ENCODE measurements at regions of chr2 and their contacts with region 1.

Region 1: DNA sequence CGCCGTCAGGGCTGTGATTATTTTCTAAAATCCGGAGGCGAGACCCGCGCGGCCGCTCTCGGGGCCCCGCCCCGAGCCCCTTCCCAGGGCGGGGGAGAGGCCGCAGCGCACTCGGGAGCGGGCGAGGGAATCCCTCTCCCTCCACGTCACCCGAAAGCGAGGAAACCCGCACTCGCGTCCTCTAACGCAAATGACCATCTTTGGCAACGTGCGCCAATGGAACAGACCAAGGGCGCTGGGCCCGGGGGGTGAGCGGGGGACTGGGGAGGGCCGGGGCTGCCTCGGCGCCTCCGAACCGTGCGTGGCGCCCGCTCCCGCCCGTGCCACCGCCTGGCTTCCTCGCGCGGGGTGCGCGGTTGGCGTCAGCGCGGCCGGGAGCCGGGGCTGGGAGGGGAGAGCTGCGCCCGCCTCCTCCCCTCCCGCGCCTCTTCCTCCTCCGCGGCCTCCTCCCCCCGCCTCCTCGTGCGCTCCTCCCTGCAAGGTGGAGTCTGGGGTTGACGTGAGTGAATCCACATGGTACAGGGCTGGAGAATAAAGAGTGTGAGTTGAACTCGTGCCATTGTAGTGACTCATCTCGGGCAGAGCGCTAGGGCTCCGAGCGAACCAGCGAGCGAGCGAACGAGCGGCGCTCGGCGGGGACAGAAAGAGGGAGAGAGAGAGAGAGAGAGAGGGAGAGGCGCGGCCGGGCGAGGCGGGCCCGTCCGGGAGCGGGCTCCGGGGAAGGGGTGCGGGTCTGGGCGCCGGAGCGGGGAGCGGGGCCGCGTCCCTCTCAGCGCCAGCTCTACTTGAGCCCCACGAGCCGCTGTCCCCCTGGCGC is at the start of gene FOSL2:
- DNase-seq: peak; percentile 100
- ATAC-seq: peak; percentile 62
- H3K4me3 ChIP-seq: peak within 1 kb of the TSS; percentile 91
- H3K27ac ChIP-seq: peak within 1 kb of the TSS; percentile 93
- H3K4me1 ChIP-seq: peaks cover 12% of the 10 kb centered on the region
- H3K27me3 ChIP-seq: no peaks in the 10 kb centered on the region
- CTCF ChIP-seq: 0 out of 2 replicates have a peak, but pooled peaks have one; percentile 5
- POLR2A ChIP-seq: peak; percentile 41; the same call in 1 of the 2 replicates
- RAD21 ChIP-seq: peak; percentile 30
- total RNA-seq, gene FOSL2: 31.4 and 32.2 TPM in 2 replicates

Region 2: GRCh38 chr2:27703638-27704341 is 688.7 kb before region 1 on chr2:
- CTCF ChIA-PET with region 1: interaction called, 3 read pairs
- POLR2A ChIA-PET with region 1: interaction called, 18 read pairs
- dilution Hi-C with region 1: no loop called
- in situ Hi-C with region 1: no loop called
- intact Hi-C with region 1: loop called (anchors 1 kb)
- DNase-seq: peak; percentile 96
- ATAC-seq: peak; percentile 70
- H3K4me3 ChIP-seq: no peak overlapping the region
- H3K27ac ChIP-seq: peak overlapping the region; percentile 35; the same call in 1 of the 2 replicates
- H3K4me1 ChIP-seq: peaks cover 18% of the 10 kb centered on the region
- H3K27me3 ChIP-seq: no peaks in the 10 kb centered on the region
- CTCF ChIP-seq: peak; percentile 96
- POLR2A ChIP-seq: no peak
- RAD21 ChIP-seq: peak; percentile 93

Region 3: GRCh38 chr2:27771548-27772335 is 620.8 kb before region 1 on chr2 and contains the start of gene MRPL33:
- CTCF ChIA-PET with region 1: interaction called, 3 read pairs
- POLR2A ChIA-PET with region 1: no interaction called
- dilution Hi-C with region 1: no loop called
- in situ Hi-C with region 1: no loop called
- intact Hi-C with region 1: loop called (anchors 1 kb)
- DNase-seq: peak; percentile 85
- ATAC-seq: peak; percentile 97
- H3K4me3 ChIP-seq: peak within 1 kb of the TSS; percentile 73
- H3K27ac ChIP-seq: peak within 1 kb of the TSS; percentile 88
- H3K4me1 ChIP-seq: peaks cover 12% of the 10 kb centered on the region
- H3K27me3 ChIP-seq: no peaks in the 10 kb centered on the region
- CTCF ChIP-seq: no peak
- POLR2A ChIP-seq: peak; percentile 70
- RAD21 ChIP-seq: no peak
- total RNA-seq, gene MRPL33: 13.3 and 48.6 TPM in 2 replicates

Region 4: GRCh38 chr2:27954771-27955383 is 437.6 kb before region 1 on chr2:
- CTCF ChIA-PET with region 1: no interaction called
- POLR2A ChIA-PET with region 1: no interaction called
- dilution Hi-C with region 1: no loop called
- in situ Hi-C with region 1: loop called (anchors 10 kb)
- intact Hi-C with region 1: loop called (anchors 1 kb)
- DNase-seq: peak; percentile 97
- ATAC-seq: peak; percentile 68
- H3K4me3 ChIP-seq: no peak overlapping the region
- H3K27ac ChIP-seq: peak overlapping the region; percentile 73
- H3K4me1 ChIP-seq: peaks cover 16% of the 10 kb centered on the region
- H3K27me3 ChIP-seq: no peaks in the 10 kb centered on the region
- CTCF ChIP-seq: peak; percentile 46
- POLR2A ChIP-seq: no peak
- RAD21 ChIP-seq: peak; percentile 45

Region 5: GRCh38 chr2:28164280-28164801 is 228.2 kb before region 1 on chr2:
- CTCF ChIA-PET with region 1: no interaction called
- POLR2A ChIA-PET with region 1: no interaction called
- dilution Hi-C with region 1: no loop called
- in situ Hi-C with region 1: no loop called
- intact Hi-C with region 1: loop called (anchors 10 kb)
- DNase-seq: peak; percentile 64
- ATAC-seq: peak; percentile 80
- H3K4me3 ChIP-seq: no peak overlapping the region
- H3K27ac ChIP-seq: peak overlapping the region; percentile 37; the same call in 1 of the 2 replicates
- H3K4me1 ChIP-seq: peaks cover 16% of the 10 kb centered on the region
- H3K27me3 ChIP-seq: no peaks in the 10 kb centered on the region
- CTCF ChIP-seq: no peak
- POLR2A ChIP-seq: no peak
- RAD21 ChIP-seq: no peak

Region 6: GRCh38 chr2:28300485-28301341 is 91.8 kb before region 1 on chr2:
- CTCF ChIA-PET with region 1: no interaction called
- POLR2A ChIA-PET with region 1: interaction called, 4 read pairs
- dilution Hi-C with region 1: no loop called
- in situ Hi-C with region 1: no loop called
- intact Hi-C with region 1: loop called (anchors 1 kb)
- DNase-seq: peak; percentile 98
- ATAC-seq: peak; percentile 83
- H3K4me3 ChIP-seq: peak overlapping the region; percentile 37; the same call in 1 of the 2 replicates
- H3K27ac ChIP-seq: peak overlapping the region; percentile 94
- H3K4me1 ChIP-seq: peaks cover 17% of the 10 kb centered on the region
- H3K27me3 ChIP-seq: no peaks in the 10 kb centered on the region
- CTCF ChIP-seq: no peak
- POLR2A ChIP-seq: no peak
- RAD21 ChIP-seq: peak; percentile 4; the same call in 1 of the 2 replicates

Measured in IMR-90 (cell line).